HepG2 (cell line): ENCODE measurements at regions of chr2 and their contacts with region 1.

Region 1: GRCh38 chr2:101238930-101239759 is 13.5 kb upstream of the CNOT11 start:
- DNase-seq: peak; percentile 99
- ATAC-seq: peak; percentile 99
- H3K4me3 ChIP-seq: peak overlapping the region in 1 of 3 experiments; percentile 47; a peak in 2 of 6 replicates
- H3K27ac ChIP-seq: peak overlapping the region; percentile 98
- H3K4me1 ChIP-seq: peaks cover 81% of the 10 kb centered on the region
- H3K27me3 ChIP-seq: no peaks in the 10 kb centered on the region
- CTCF ChIP-seq: no peak; the same call in 1 of the 2 replicates
- EP300 ChIP-seq: peak in 1 of 2 experiments; percentile 76; a peak in 2 of 4 replicates
- POLR2A ChIP-seq: peak; percentile 57 to 77
- RAD21 ChIP-seq: no peak

Region 2: DNA sequence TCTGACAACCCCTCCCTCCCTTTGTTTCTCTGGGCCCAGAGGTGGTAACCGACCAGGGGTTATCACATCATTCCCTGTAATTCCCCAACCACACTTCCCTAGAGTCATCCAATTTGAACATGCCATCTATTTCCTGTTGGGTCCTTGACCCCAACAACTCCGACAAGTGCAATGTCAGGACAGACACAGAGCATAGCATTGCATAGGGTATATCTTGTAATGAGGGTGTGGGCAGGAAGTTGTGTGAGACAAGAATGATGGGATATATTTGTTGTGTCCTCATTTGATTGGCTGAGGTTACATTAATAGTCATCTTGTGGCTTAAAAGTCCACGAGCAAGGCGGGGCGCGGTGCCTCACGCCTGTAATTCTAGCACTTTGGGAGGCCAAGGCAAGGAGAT is 19.9 kb before region 1 on chr2:
- CTCF ChIA-PET with region 1: no interaction called
- POLR2A ChIA-PET with region 1: interaction called, 13 read pairs
- in situ Hi-C with region 1: no loop called
- intact Hi-C with region 1: no loop called
- DNase-seq: no peak
- ATAC-seq: no peak
- H3K4me3 ChIP-seq: no peak overlapping the region
- H3K27ac ChIP-seq: no peak overlapping the region
- H3K4me1 ChIP-seq: peaks cover 38% of the 10 kb centered on the region
- H3K27me3 ChIP-seq: no peaks in the 10 kb centered on the region
- CTCF ChIP-seq: no peak
- EP300 ChIP-seq: no peak
- POLR2A ChIP-seq: no peak
- RAD21 ChIP-seq: no peak